Heart right ventricle (tissue), 16 donors: ENCODE measurements at regions of chr17 and their contacts with region 1.

Region 1: GRCh38 chr17:29579866-29580771 is 9.3 kb downstream of the GIT1 start:
- DNase-seq: peak; percentile 81 to 87
- ATAC-seq: peak; percentile 62 to 81 (median 73)
- H3K4me3 ChIP-seq: no peak overlapping the region
- H3K27ac ChIP-seq: peak overlapping the region in 3 of 10 donors; percentile 23 to 34 (median 24)
- H3K4me1 ChIP-seq: peaks cover 0 to 47% (median 24%) of the 10 kb centered on the region in 9 donors
- H3K27me3 ChIP-seq: no peaks in the 10 kb centered on the region
- CTCF ChIP-seq: peak; percentile 85 to 93 (median 91)

Region 2: DNA sequence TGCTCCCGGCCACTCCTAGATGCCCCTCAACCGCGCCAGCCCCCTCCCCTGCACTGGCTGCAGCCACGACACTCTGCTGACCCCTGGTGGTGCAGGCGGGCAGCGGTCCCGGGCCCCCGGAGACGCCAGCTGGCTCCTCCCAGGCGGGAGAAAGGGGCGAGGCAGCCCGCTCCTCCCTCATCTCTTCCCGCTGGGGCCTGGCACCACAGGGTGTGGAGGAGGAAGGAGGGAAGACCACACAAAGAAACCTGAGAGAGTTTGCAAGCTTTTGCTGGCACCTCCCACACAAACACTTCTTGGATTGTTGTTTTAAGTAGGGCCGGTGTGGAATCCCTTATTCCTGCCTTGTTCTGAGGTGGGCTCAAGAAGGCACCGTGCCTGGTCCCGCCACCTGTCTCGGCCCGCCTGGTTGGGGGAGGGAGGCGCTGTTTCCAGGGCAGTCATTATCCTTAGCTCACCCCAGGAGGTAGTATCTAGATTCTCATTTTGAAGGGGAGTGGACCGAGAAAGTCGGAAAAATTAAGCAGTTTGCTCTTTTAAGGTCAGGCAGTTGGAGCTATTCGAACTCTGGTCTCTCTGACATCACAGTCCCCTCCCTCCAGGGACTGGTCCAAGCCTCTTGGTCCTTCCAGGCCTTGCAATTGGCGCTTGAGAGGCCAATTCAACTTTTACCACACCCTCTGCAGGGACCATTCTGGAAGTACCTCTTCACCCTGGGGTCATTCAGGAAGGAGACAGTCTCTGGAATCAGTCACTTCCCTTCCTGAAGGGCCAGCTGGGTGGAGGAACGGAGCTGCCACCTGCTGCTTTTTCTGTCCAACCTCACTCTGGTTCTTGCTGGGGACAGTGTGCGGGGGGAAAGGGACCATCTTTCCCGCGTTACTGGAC is 11.9 kb after region 1 on chr17:
- intact Hi-C with region 1: loop called in 2 of 10 experiments (anchors 1 kb)
- DNase-seq: peak; percentile 88 to 93
- ATAC-seq: peak; percentile 63 to 87 (median 77)
- H3K4me3 ChIP-seq: peak overlapping the region in 9 of 10 donors; percentile 12 to 78 (median 63)
- H3K27ac ChIP-seq: peak overlapping the region in 9 of 10 donors; percentile 16 to 95 (median 89)
- H3K4me1 ChIP-seq: peaks cover 26 to 85% (median 67%) of the 10 kb centered on the region in 9 donors
- H3K27me3 ChIP-seq: peaks cover 0 to 15% (median 0%) of the 10 kb centered on the region in 7 donors
- CTCF ChIP-seq: peak; percentile 29 to 100 (median 98)

Region 3: GRCh38 chr17:29617125-29617480 is 37.0 kb after region 1 on chr17:
- intact Hi-C with region 1: loop called in 2 of 10 experiments (anchors 5 to 10 kb)
- DNase-seq: peak; percentile 56 to 75
- ATAC-seq: no peak
- H3K4me3 ChIP-seq: peak overlapping the region in 7 of 10 donors; percentile 19 to 59 (median 39)
- H3K27ac ChIP-seq: peak overlapping the region in 1 of 10 donors; percentile 83
- H3K4me1 ChIP-seq: peaks cover 14 to 95% (median 77%) of the 10 kb centered on the region in 9 donors
- H3K27me3 ChIP-seq: peaks cover 0 to 46% (median 0%) of the 10 kb centered on the region in 7 donors
- CTCF ChIP-seq: peak in 7 of 9 donors; percentile 26 to 73 (median 41)

Region 4: GRCh38 chr17:29622337-29623282 is 42.5 kb after region 1 on chr17 and contains the start of gene CORO6:
- intact Hi-C with region 1: loop called in 1 of 10 experiments (anchors 10 kb)
- DNase-seq: peak in 1 of 2 donors; percentile 76
- ATAC-seq: peak; percentile 69 to 79 (median 74)
- H3K4me3 ChIP-seq: peak within 1 kb of the TSS; percentile 55 to 92 (median 79)
- H3K27ac ChIP-seq: peak within 1 kb of the TSS; percentile 78 to 95 (median 88)
- H3K4me1 ChIP-seq: peaks cover 7 to 84% (median 47%) of the 10 kb centered on the region in 9 donors
- H3K27me3 ChIP-seq: peaks cover 0 to 17% (median 0%) of the 10 kb centered on the region in 7 donors
- CTCF ChIP-seq: peak in 1 of 9 donors; percentile 10
- total RNA-seq, gene CORO6: 72.0 to 110 (median 90.9) TPM

Region 5: GRCh38 chr17:29777663-29778062 is 197.5 kb after region 1 on chr17:
- intact Hi-C with region 1: loop called in 2 of 10 experiments (anchors 5 kb)
- DNase-seq: no peak
- ATAC-seq: no peak
- H3K4me3 ChIP-seq: no peak overlapping the region
- H3K27ac ChIP-seq: no peak overlapping the region
- H3K4me1 ChIP-seq: peaks cover 0 to 14% (median 9%) of the 10 kb centered on the region in 9 donors
- H3K27me3 ChIP-seq: no peaks in the 10 kb centered on the region
- CTCF ChIP-seq: no peak